ENCODE measurements at regions of chr10 and their contacts with region 1.

Region 1: DNA sequence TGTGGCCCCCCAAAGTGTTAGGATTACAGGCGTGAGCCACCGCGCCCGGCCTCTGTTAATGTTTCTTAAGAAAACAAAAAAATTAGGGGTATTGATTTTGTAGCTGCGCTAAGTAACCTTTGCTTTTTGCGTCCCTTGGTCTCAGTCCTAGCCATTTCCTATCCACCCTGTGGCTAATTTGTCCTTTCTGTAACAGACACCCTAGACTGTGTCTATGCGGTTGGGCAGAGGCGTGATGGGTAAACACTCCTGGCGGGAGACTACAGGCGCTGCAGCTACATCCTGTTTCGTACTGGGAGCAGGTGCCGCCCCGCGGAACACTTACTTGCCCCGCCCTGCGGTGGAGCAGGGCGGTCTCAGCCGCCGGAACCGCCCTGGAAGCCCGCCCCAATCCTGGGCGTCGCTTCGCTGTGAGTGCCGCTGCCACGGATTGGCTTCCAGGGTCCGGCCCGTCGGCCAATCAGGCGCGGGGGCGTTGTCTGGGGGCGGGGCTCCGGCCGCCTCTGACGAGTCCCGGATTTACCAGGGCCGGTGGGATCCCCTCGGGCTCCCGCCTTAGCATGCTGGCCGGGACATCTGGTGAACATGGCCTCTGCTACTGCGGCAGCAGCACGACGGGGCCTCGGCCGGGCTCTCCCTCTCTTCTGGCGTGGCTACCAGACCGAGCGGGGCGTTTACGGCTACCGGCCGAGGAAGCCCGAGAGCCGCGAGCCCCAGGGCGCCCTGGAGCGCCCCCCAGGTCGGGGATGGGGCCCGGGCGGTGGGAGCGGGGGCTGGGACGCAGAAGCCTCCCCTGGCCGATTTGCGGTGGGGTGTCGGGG is at the start of gene DHTKD1:
- DNase-seq: peak; percentile 98 to 99
- ATAC-seq: peak; percentile 97 to 100 (median 97)
- H3K4me3 ChIP-seq: peak within 1 kb of the TSS; percentile 83
- H3K4me3 Mint-ChIP-seq: peak within 1 kb of the TSS; percentile 90
- H3K27ac ChIP-seq: peak within 1 kb of the TSS; percentile 69
- H3K27ac Mint-ChIP-seq: peak within 1 kb of the TSS; percentile 81 to 85
- H3K4me1 ChIP-seq: peaks cover 14% of the 10 kb centered on the region
- H3K4me1 Mint-ChIP-seq: peaks cover 12 to 16% of the 10 kb centered on the region in 2 donors
- H3K27me3 ChIP-seq: no peaks in the 10 kb centered on the region
- H3K27me3 Mint-ChIP-seq: no peaks in the 10 kb centered on the region
- CTCF ChIP-seq: no peak
- total RNA-seq, gene DHTKD1: 14.4 to 17.3 (median 14.8) TPM

Region 2: GRCh38 chr10:11631890-11632587 is 436.6 kb before region 1 on chr10:
- intact Hi-C with region 1: no loop called
- DNase-seq: peak in 1 of 2 donors; percentile 64
- ATAC-seq: peak; percentile 96 to 100 (median 97)
- H3K4me3 ChIP-seq: peak overlapping the region; percentile 7
- H3K4me3 Mint-ChIP-seq: peak overlapping the region; percentile 72
- H3K27ac ChIP-seq: peak overlapping the region; percentile 53
- H3K27ac Mint-ChIP-seq: peak overlapping the region; percentile 37 to 63
- H3K4me1 ChIP-seq: peaks cover 10% of the 10 kb centered on the region
- H3K4me1 Mint-ChIP-seq: peaks cover 11 to 19% of the 10 kb centered on the region in 2 donors
- H3K27me3 ChIP-seq: no peaks in the 10 kb centered on the region
- H3K27me3 Mint-ChIP-seq: peaks cover 5 to 11% of the 10 kb centered on the region in 2 donors
- CTCF ChIP-seq: no peak

Region 3: DNA sequence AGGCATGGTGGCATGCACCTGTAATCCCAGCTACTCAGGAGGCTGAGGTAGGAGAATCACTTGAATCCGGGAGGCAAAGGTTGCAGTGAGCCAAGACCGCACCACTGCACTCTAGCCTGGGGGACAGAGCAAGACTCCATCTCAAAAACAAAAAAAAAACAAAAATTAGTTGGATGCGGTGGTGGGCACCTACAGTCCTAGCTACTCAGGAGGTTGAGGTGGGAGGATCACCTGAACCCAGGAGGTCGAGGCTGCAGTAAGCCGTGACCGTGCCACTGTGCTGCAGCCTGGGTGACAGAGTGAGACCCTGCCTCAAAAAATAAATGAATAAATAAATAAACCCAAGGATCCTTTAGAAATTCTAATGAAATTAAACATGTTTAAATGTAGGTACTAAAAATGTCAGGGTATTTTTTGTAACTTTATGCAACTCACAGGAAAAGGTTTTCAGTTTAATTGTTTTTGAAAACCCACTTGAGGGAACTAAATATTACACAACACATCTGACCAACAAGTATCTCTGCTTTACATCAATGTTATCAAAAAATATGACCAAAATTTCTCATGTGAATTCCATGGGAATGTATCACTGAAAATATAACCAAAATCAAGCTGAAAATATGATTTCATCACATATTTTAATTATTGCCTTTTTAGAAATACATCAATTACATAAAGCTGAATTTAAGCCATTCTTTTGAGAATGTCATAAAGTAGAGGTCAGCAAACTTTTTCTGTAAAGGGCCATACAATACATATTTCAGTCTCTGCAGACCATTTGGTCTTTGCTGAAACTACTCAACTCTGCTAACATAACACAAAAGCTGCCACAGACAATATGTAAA is 50.0 kb before region 1 on chr10:
- intact Hi-C with region 1: no loop called
- DNase-seq: no peak
- ATAC-seq: no peak
- H3K4me3 ChIP-seq: no peak overlapping the region
- H3K4me3 Mint-ChIP-seq: no peak overlapping the region
- H3K27ac ChIP-seq: no peak overlapping the region
- H3K27ac Mint-ChIP-seq: no peak overlapping the region
- H3K4me1 ChIP-seq: peaks cover 9% of the 10 kb centered on the region
- H3K4me1 Mint-ChIP-seq: peaks cover 22 to 31% of the 10 kb centered on the region in 2 donors
- H3K27me3 ChIP-seq: no peaks in the 10 kb centered on the region
- H3K27me3 Mint-ChIP-seq: no peaks in the 10 kb centered on the region
- CTCF ChIP-seq: no peak

Region 4: GRCh38 chr10:12042797-12043651 is 25.6 kb before region 1 on chr10 and contains the start of gene UPF2:
- intact Hi-C with region 1: loop called (anchors 1 kb)
- DNase-seq: peak; percentile 88 to 98
- ATAC-seq: peak; percentile 85 to 93 (median 88)
- H3K4me3 ChIP-seq: peak within 1 kb of the TSS; percentile 100
- H3K4me3 Mint-ChIP-seq: peak within 1 kb of the TSS; percentile 98
- H3K27ac ChIP-seq: peak within 1 kb of the TSS; percentile 95
- H3K27ac Mint-ChIP-seq: peak within 1 kb of the TSS; percentile 97 to 98
- H3K4me1 ChIP-seq: peaks cover 12% of the 10 kb centered on the region
- H3K4me1 Mint-ChIP-seq: peaks cover 27 to 34% of the 10 kb centered on the region in 2 donors
- H3K27me3 ChIP-seq: no peaks in the 10 kb centered on the region
- H3K27me3 Mint-ChIP-seq: no peaks in the 10 kb centered on the region
- CTCF ChIP-seq: no peak
- total RNA-seq, gene UPF2: 29.3 to 33.2 (median 30.1) TPM

Region 5: GRCh38 chr10:12129222-12130111 is 60.8 kb after region 1 on chr10 and contains the start of gene SEC61A2:
- intact Hi-C with region 1: loop called (anchors 1 kb)
- DNase-seq: peak; percentile 98 to 99
- ATAC-seq: peak; percentile 93 to 98 (median 95)
- H3K4me3 ChIP-seq: peak within 1 kb of the TSS; percentile 81
- H3K4me3 Mint-ChIP-seq: peak within 1 kb of the TSS; percentile 92
- H3K27ac ChIP-seq: peak within 1 kb of the TSS; percentile 86
- H3K27ac Mint-ChIP-seq: peak within 1 kb of the TSS; percentile 69 to 74
- H3K4me1 ChIP-seq: peaks cover 17% of the 10 kb centered on the region
- H3K4me1 Mint-ChIP-seq: peaks cover 13 to 14% of the 10 kb centered on the region in 2 donors
- H3K27me3 ChIP-seq: no peaks in the 10 kb centered on the region
- H3K27me3 Mint-ChIP-seq: no peaks in the 10 kb centered on the region
- CTCF ChIP-seq: no peak
- total RNA-seq, gene SEC61A2: 16.6 to 22.2 (median 17.4) TPM

Region 6: GRCh38 chr10:12235796-12236195 is 167.1 kb after region 1 on chr10:
- intact Hi-C with region 1: no loop called
- DNase-seq: no peak
- ATAC-seq: no peak
- H3K4me3 ChIP-seq: no peak overlapping the region
- H3K4me3 Mint-ChIP-seq: no peak overlapping the region
- H3K27ac ChIP-seq: no peak overlapping the region
- H3K27ac Mint-ChIP-seq: no peak overlapping the region
- H3K4me1 ChIP-seq: no peaks in the 10 kb centered on the region
- H3K4me1 Mint-ChIP-seq: peaks cover 0 to 3% of the 10 kb centered on the region in 2 donors
- H3K27me3 ChIP-seq: no peaks in the 10 kb centered on the region
- H3K27me3 Mint-ChIP-seq: no peaks in the 10 kb centered on the region
- CTCF ChIP-seq: no peak

Measured in natural killer cell (primary cell).